ENCODE measurements at regions of chr12 and their contacts with region 1.

Region 1: GRCh38 chr12:98939350-98939749 is 294.3 kb downstream of the APAF1 start:
- DNase-seq: peak in 5 of 10 donors; percentile 22 to 56 (median 43)
- H3K4me3 ChIP-seq: no peak overlapping the region
- H3K27ac ChIP-seq: no peak overlapping the region
- H3K27me3 ChIP-seq: no peaks in the 10 kb centered on the region
- CTCF ChIP-seq: peak in 55 of 56 donors; percentile 45 to 87 (median 68)

Region 2: GRCh38 chr12:98698603-98699463 is 240.5 kb before region 1 on chr12:
- intact Hi-C with region 1: loop called in 1 of 2 experiments (anchors 5 kb)
- DNase-seq: peak; percentile 54 to 81 (median 72)
- H3K4me3 ChIP-seq: no peak overlapping the region
- H3K27ac ChIP-seq: peak overlapping the region in 5 of 59 donors; percentile 3 to 42 (median 36)
- H3K27me3 ChIP-seq: no peaks in the 10 kb centered on the region
- CTCF ChIP-seq: peak in 55 of 56 donors; percentile 35 to 88 (median 75)

Region 3: GRCh38 chr12:98725476-98726247 is 213.7 kb before region 1 on chr12:
- intact Hi-C with region 1: loop called in 1 of 2 experiments (anchors 5 kb)
- DNase-seq: peak; percentile 55 to 90 (median 74)
- H3K4me3 ChIP-seq: peak overlapping the region in 23 of 59 donors; percentile 1 to 45 (median 22)
- H3K27ac ChIP-seq: peak overlapping the region; percentile 39 to 94 (median 84)
- H3K27me3 ChIP-seq: no peaks in the 10 kb centered on the region
- CTCF ChIP-seq: peak in 55 of 56 donors; percentile 25 to 78 (median 58)

Region 4: DNA sequence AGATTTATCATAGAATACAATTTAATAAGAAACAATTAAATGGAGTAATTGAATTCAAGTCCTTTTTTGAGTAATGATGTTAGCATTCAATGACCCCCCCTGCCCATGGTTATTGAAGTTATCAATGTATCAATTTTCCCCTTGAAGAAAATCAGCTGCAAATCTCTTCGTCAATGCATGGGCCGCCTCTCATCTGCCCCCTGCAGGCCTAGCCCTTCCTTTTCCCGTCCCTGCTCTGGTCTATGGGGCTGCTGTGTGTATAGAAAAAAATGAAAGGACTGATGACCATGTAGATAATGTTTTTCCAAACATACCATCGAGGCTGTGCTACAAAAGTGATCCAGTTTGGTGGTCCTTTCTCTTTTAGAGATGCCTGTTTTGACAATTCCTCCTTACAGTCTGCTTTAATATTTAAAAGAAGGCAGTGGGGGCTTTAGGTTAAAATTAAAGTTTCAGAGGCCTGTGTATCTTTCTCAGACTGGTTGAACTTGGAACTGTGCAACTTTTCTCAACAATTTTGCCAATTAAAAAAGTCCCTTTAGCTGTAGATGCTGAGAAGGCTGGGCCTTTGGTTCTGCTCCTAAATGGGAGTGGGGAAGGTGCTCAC is 195.9 kb before region 1 on chr12:
- intact Hi-C with region 1: loop called in 1 of 2 experiments (anchors 10 kb)
- DNase-seq: peak in 2 of 10 donors; percentile 43 to 54
- H3K4me3 ChIP-seq: peak overlapping the region in 6 of 59 donors; percentile 2 to 62 (median 23)
- H3K27ac ChIP-seq: peak overlapping the region in 50 of 59 donors; percentile 2 to 93 (median 68)
- H3K27me3 ChIP-seq: no peaks in the 10 kb centered on the region
- CTCF ChIP-seq: peak in 53 of 56 donors; percentile 15 to 79 (median 58)

Region 5: DNA sequence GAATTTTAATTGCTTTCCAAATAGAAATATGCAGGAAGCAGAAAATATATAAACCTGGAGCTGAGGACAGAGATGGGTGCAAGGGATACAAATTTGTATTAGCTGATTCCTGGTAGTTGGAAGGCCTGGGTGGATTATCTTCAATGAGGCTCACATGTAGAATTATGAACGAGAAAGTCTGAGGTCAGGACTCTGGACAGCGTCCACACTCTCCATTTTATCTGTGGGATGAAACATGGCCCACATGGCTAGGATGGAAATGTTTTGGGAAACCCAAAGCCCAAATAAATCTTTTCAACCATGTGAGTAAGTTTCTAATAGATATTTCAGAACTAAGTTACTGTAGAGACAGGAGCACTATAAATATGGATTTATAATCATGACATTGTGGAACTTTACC is 38.2 kb before region 1 on chr12:
- intact Hi-C with region 1: loop called in 1 of 2 experiments (anchors 5 kb)
- DNase-seq: no peak
- H3K4me3 ChIP-seq: no peak overlapping the region
- H3K27ac ChIP-seq: peak overlapping the region in 10 of 59 donors; percentile 5 to 44 (median 30)
- H3K27me3 ChIP-seq: no peaks in the 10 kb centered on the region
- CTCF ChIP-seq: no peak

Measured in dorsolateral prefrontal cortex (tissue), 120 donors.